Heart right ventricle (tissue), 16 donors: ENCODE measurements at regions of chr10 and their contacts with region 1.

Region 1: DNA sequence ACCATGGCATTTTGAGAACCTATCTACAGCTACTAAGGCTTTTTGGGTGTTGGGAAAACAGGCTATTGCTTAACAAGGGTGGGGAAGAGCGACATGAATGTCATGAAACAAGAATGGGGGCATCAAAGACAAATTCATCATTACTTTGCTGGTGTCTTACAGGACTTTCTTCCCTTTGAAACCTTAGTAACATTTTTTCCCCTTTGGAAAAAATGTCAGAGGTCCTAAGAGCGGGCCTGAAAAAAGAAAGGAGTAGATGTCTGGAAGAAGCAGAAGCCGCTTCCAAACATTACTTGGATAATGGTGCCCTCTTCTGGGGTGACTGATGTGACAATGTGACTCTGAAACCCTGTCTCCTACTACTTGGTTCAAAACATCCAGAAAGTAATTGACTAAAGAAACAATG is 3.8 kb upstream of the DDX50 start:
- DNase-seq: peak in 1 of 2 donors; percentile 55
- ATAC-seq: no peak
- H3K4me3 ChIP-seq: no peak overlapping the region
- H3K27ac ChIP-seq: no peak overlapping the region
- H3K4me1 ChIP-seq: peaks cover 3 to 16% (median 13%) of the 10 kb centered on the region in 9 donors
- H3K27me3 ChIP-seq: no peaks in the 10 kb centered on the region
- CTCF ChIP-seq: peak in 8 of 9 donors; percentile 10 to 69 (median 54)

Region 2: GRCh38 chr10:68550747-68551411 is 346.5 kb before region 1 on chr10:
- intact Hi-C with region 1: loop called in 8 of 10 experiments (anchors 5 to 10 kb)
- DNase-seq: peak in 1 of 2 donors; percentile 58
- ATAC-seq: peak in 6 of 8 donors; percentile 74 to 88 (median 80)
- H3K4me3 ChIP-seq: no peak overlapping the region
- H3K27ac ChIP-seq: no peak overlapping the region
- H3K4me1 ChIP-seq: no peaks in the 10 kb centered on the region
- H3K27me3 ChIP-seq: no peaks in the 10 kb centered on the region
- CTCF ChIP-seq: peak; percentile 69 to 87 (median 76)

Region 3: DNA sequence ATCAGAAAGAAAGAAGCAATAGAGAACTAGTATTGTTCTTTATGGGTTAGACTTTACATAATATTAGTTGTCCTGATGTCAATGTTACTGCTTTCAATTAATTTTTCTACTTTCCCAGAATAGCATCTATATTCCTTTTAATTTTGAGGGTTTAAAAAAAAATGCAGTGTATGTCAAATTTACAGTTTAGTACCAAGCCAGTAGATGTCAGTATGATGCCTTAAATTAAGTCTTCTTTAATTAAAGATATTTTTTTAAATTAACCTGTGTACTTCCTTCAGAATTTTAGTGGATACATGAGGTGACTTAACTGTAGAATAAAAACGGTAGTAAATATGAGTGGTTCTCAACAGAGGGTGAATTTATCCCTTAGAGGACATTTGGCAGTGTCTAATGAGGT is 105.2 kb before region 1 on chr10:
- intact Hi-C with region 1: loop called in 5 of 10 experiments (anchors 5 to 10 kb)
- DNase-seq: no peak
- ATAC-seq: no peak
- H3K4me3 ChIP-seq: no peak overlapping the region
- H3K27ac ChIP-seq: no peak overlapping the region
- H3K4me1 ChIP-seq: no peaks in the 10 kb centered on the region
- H3K27me3 ChIP-seq: no peaks in the 10 kb centered on the region
- CTCF ChIP-seq: peak in 6 of 9 donors; percentile 16 to 36 (median 24)

Region 4: GRCh38 chr10:68826764-68827591 is 70.4 kb before region 1 on chr10 and contains the start of gene STOX1:
- intact Hi-C with region 1: loop called in 1 of 10 experiments (anchors 10 kb)
- DNase-seq: peak; percentile 34 to 64
- ATAC-seq: peak; percentile 54 to 83 (median 76)
- H3K4me3 ChIP-seq: peak within 1 kb of the TSS; percentile 34 to 74 (median 60)
- H3K27ac ChIP-seq: peak within 1 kb of the TSS in 2 of 10 donors; percentile 28 to 52
- H3K4me1 ChIP-seq: peaks cover 0 to 11% (median 4%) of the 10 kb centered on the region in 9 donors
- H3K27me3 ChIP-seq: peaks cover 0 to 32% (median 16%) of the 10 kb centered on the region in 7 donors
- CTCF ChIP-seq: no peak
- total RNA-seq, gene STOX1: 0.09 to 1.1 (median 0.20) TPM in 8 of 10 donors, not detected in the others

Region 5: GRCh38 chr10:69101451-69102095 is 204.2 kb after region 1 on chr10:
- intact Hi-C with region 1: no loop called
- DNase-seq: no peak
- ATAC-seq: peak in 3 of 8 donors; percentile 33 to 66 (median 41)
- H3K4me3 ChIP-seq: no peak overlapping the region
- H3K27ac ChIP-seq: peak overlapping the region in 1 of 10 donors; percentile 59
- H3K4me1 ChIP-seq: peaks cover 0 to 60% (median 0%) of the 10 kb centered on the region in 9 donors
- H3K27me3 ChIP-seq: no peaks in the 10 kb centered on the region
- CTCF ChIP-seq: no peak